PC-3 (cell line): ENCODE measurements at regions of chr2 and their contacts with region 1.

Region 1: DNA sequence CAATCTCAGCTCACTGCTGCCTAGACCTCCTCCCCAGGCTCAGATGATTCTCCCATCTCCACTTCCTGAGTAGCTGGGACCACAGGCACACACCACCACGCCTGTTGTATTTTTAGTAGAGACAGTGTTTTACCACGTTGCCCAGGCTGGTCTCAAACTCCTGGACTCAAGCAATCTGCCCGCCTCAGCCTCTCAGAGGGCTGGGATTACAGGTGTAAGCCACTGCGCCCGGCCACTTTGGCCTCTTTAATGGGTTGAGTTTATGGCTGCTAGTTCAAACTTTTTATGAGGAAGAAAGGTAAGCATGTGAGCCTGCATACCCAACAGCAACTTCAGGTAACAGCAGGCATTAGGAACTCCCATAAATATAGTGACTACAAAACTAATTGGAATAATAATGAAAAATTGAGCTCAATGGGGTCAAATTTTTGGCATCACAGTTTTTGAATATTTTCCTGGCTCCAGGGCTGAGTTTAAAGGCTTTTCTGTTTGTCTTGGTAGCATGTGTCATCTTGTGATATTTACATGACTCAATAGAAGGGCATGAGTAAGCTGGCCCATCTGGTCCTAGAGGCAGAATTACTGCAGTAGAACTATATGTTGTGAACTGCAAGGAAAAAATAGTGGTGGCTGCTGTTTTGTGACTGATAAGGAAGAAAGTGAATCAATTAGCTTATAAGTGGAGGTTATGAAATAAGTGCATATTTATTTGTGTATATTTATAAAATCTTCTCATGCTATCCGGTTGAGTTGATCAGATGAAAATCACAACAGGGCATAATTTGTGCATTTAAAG is 24.8 kb downstream of the GALM start:
- DNase-seq: peak; percentile 96
- ATAC-seq: peak; percentile 88
- H3K4me3 ChIP-seq: peak overlapping the region; percentile 20; the same call in 1 of the 2 replicates
- H3K27ac ChIP-seq: peak overlapping the region; percentile 96
- H3K4me1 ChIP-seq: peaks cover 56% of the 10 kb centered on the region
- H3K27me3 ChIP-seq: no peaks in the 10 kb centered on the region
- CTCF ChIP-seq: no peak

Region 2: GRCh38 chr2:38610851-38611801 is 79.6 kb before region 1 on chr2:
- CTCF ChIA-PET with region 1: no interaction called
- POLR2A ChIA-PET with region 1: no interaction called
- intact Hi-C with region 1: no loop called
- DNase-seq: peak; percentile 87
- ATAC-seq: peak; percentile 74
- H3K4me3 ChIP-seq: no peak overlapping the region
- H3K27ac ChIP-seq: peak overlapping the region; percentile 75
- H3K4me1 ChIP-seq: peaks cover 23% of the 10 kb centered on the region
- H3K27me3 ChIP-seq: no peaks in the 10 kb centered on the region
- CTCF ChIP-seq: peak; percentile 18; the same call in 1 of the 2 replicates

Region 3: DNA sequence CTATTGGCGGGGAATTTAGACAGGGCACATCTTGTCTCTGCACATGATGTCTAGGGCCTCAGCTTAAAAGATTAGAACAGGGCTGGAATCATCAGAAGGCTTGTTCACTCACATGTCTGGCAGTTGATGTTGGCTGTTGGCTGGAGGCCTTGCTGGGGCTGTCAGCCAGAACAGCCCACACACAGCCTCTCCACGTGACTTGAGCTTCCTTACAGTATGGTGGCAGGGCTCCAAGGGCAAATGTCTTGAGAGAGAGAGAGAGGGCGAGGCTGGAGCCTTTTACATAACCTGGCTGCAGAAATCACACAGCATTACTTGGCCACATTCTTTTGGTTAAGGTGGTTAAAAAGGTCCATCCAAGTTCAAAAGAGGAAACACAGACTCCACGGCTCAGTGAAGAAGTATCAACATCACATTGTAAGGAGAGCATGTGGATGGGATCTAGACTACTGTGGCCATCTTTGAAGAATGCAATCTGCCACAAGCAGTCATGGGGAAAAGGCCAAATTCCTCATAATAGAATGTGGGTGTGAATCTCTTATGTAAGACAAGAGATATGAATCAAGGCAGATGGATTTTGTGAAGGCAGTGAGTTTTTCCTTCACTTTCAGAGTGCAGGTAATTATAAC is 30.0 kb after region 1 on chr2:
- CTCF ChIA-PET with region 1: no interaction called
- POLR2A ChIA-PET with region 1: no interaction called
- intact Hi-C with region 1: loop called (anchors 1 kb)
- DNase-seq: peak; percentile 95
- ATAC-seq: peak; percentile 89
- H3K4me3 ChIP-seq: no peak overlapping the region
- H3K27ac ChIP-seq: peak overlapping the region; percentile 38
- H3K4me1 ChIP-seq: peaks cover 27% of the 10 kb centered on the region
- H3K27me3 ChIP-seq: no peaks in the 10 kb centered on the region
- CTCF ChIP-seq: no peak

Region 4: DNA sequence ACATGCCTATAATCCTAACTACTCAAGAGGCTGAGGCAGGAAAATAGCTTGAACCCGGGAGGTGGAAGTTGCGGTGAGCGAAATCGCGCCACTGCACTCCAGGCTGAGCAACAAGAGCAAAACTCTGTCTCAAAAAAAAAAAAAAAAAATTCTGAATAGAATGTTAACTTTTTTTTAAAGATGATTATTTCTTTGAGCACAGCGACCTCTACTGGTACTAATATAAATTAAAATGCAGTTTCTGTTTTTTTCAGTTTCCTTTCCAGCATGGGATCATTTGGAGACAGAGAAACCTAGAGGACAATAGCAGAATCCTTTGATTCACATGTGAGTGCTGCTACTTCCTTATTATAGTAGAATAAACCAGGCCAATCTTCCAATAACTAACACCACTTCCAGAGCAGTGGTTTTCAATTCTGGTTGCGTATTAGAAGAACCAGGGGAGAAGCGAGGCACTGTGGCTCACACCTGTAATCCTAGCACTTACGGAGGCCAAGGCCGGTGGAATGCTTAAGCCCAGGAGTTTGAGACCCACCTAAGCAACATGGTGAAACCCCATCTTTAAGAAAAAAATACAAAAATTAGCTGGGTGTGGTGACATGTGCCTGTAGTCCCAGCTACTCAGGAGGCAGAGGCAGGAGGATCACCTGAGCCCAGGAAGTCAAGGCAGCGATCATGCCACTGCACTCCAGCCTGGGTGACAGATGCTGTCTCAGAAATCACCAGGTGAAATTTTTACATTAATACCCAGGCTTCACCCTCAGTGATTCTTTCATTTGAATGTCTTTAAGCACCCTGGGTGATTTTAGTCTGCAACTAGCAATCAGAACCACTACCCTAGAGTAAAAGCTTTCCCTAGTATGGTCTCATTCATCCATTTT is 50.4 kb after region 1 on chr2:
- CTCF ChIA-PET with region 1: no interaction called
- POLR2A ChIA-PET with region 1: no interaction called
- intact Hi-C with region 1: no loop called
- DNase-seq: peak; percentile 72
- ATAC-seq: peak; percentile 60
- H3K4me3 ChIP-seq: no peak overlapping the region
- H3K27ac ChIP-seq: no peak overlapping the region
- H3K4me1 ChIP-seq: no peaks in the 10 kb centered on the region
- H3K27me3 ChIP-seq: no peaks in the 10 kb centered on the region
- CTCF ChIP-seq: peak; percentile 64

Region 5: GRCh38 chr2:39069136-39069515 is 378.4 kb after region 1 on chr2:
- CTCF ChIA-PET with region 1: no interaction called
- POLR2A ChIA-PET with region 1: no interaction called
- intact Hi-C with region 1: no loop called
- DNase-seq: no peak
- ATAC-seq: no peak
- H3K4me3 ChIP-seq: no peak overlapping the region
- H3K27ac ChIP-seq: no peak overlapping the region
- H3K4me1 ChIP-seq: no peaks in the 10 kb centered on the region
- H3K27me3 ChIP-seq: no peaks in the 10 kb centered on the region
- CTCF ChIP-seq: peak; percentile 22; the same call in 1 of the 2 replicates

Region 6: GRCh38 chr2:39080152-39080551 is 389.5 kb after region 1 on chr2:
- CTCF ChIA-PET with region 1: no interaction called
- POLR2A ChIA-PET with region 1: no interaction called
- intact Hi-C with region 1: no loop called
- DNase-seq: no peak
- ATAC-seq: no peak
- H3K4me3 ChIP-seq: no peak overlapping the region
- H3K27ac ChIP-seq: no peak overlapping the region
- H3K4me1 ChIP-seq: no peaks in the 10 kb centered on the region
- H3K27me3 ChIP-seq: no peaks in the 10 kb centered on the region
- CTCF ChIP-seq: no peak